A549 (cell line): ENCODE measurements at regions of chr13 and their contacts with region 1.

Region 1: DNA sequence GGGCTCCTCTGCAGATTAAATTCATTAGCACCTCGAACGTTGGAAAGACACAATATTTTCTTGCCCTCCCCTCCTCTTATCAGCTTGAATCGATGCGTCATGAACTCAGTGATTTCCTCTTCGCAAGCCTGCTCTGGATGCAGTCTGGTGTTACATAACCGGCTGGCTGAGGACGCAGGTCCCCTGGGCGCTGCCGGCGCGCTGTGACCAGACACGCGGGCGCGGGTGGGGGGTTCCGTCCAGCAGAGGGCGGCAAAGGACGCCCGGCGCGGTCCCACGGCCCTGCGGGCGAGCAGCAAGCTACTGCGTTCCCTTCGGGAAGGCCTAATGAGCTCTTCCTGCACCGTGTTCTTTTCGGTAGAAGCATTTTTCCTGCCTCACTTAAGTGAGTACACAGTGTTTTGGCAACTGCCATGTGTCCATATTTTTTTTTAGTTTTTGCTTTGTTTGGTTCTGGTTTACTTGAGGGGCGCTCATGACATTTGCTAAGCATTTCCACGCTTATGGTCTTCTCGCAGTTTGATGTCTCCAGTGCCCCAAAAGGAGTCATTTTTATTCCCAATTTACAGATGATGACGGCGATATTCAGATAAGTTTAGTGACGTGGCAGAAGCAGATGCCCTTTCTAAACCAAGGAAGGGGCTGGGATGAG is 112.2 kb upstream of the MBNL2 start:
- DNase-seq: peak; percentile 74 to 83
- ATAC-seq: peak; percentile 97 to 98
- H3K4me3 ChIP-seq: no peak overlapping the region
- H3K27ac ChIP-seq: peak overlapping the region; percentile 61 to 64; a peak in 5 of 6 replicates
- H3K4me1 ChIP-seq: peaks cover 46% of the 10 kb centered on the region
- CTCF ChIP-seq: peak; percentile 89
- EP300 ChIP-seq: no peak
- POLR2A ChIP-seq: no peak
- RAD21 ChIP-seq: peak; percentile 95 to 99

Region 2: GRCh38 chr13:96822895-96823294 is 287.1 kb before region 1 on chr13:
- CTCF ChIA-PET with region 1: no interaction called
- POLR2A ChIA-PET with region 1: no interaction called
- DNase-seq: peak; percentile 4 to 40
- ATAC-seq: peak; percentile 82 to 94
- H3K4me3 ChIP-seq: no peak overlapping the region
- H3K27ac ChIP-seq: no peak overlapping the region
- H3K4me1 ChIP-seq: no peaks in the 10 kb centered on the region
- CTCF ChIP-seq: no peak
- EP300 ChIP-seq: no peak
- POLR2A ChIP-seq: no peak
- RAD21 ChIP-seq: no peak

Region 3: DNA sequence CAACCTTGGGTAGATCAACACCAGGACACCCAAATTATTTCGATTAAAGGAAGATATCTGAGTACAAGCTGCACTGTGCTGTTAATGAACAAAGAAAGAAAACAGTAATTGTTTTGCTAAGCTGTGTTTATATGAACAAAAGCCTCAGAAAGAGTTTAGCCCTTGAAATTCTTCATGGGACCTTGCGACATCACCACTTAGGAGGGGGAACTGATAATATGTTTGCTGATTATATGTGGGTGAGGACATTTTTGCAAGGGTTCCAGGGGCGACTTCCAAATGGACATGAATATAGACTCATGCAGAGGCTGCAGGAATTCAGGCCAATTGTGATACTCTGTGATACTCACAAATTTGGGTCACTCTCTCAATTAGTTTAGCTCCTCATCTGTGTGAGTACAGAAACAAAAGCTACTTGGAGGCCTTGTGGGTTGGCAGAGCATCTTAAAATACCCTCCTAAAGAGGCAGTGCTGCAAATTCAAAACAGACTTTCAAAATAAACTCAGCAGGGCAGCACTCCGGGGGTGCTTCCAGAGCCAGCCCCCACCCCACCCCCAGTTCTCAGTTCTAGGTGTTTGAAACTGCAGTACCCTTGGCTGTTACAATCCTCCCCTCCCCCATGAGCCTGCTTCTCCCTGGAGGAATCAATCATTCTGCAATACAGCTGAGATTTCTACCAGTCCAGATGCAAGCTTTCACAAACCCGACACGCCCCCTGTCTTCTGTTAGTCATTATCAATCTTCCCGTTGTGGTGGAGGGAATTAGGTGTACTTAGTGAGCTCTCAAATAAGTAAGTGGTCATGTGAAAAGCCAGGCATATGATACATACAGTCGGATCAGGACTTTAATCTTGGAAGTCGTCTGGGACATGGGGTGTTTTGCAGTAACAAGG is 15.2 kb after region 1 on chr13:
- CTCF ChIA-PET with region 1: interaction called, 20 read pairs
- POLR2A ChIA-PET with region 1: no interaction called
- DNase-seq: peak in 1 of 2 experiments; percentile 41
- ATAC-seq: peak in 1 of 2 experiments; percentile 49; a peak in 3 of 6 replicates
- H3K4me3 ChIP-seq: no peak overlapping the region
- H3K27ac ChIP-seq: peak overlapping the region; percentile 35 to 63; a peak in 5 of 6 replicates
- H3K4me1 ChIP-seq: peaks cover 63% of the 10 kb centered on the region
- CTCF ChIP-seq: no peak
- EP300 ChIP-seq: no peak
- POLR2A ChIP-seq: no peak
- RAD21 ChIP-seq: no peak

Region 4: DNA sequence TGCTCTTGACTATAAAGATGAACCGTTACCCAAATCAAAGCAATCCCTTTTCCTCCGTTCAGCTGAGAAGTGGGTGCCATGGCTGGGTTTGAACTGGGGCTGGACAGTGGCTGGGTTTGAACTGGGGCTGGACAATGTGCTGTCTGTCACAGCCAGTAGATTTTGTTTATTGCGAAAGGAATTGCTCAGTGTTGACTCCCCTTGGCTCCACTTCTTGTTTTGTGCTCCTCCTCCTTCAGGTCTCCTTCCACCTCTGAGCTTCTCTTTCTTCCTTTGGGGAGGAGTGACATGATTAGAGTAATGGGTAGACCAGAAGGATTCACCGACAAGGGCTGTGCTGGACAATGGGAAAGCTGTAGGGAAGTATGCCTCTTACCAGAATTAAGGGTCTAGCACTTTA is 92.8 kb after region 1 on chr13:
- CTCF ChIA-PET with region 1: interaction called, 171 read pairs
- POLR2A ChIA-PET with region 1: no interaction called
- DNase-seq: no peak
- ATAC-seq: no peak
- H3K4me3 ChIP-seq: no peak overlapping the region
- H3K27ac ChIP-seq: no peak overlapping the region
- H3K4me1 ChIP-seq: peaks cover 15% of the 10 kb centered on the region
- CTCF ChIP-seq: no peak
- EP300 ChIP-seq: no peak
- POLR2A ChIP-seq: no peak
- RAD21 ChIP-seq: no peak

Region 5: DNA sequence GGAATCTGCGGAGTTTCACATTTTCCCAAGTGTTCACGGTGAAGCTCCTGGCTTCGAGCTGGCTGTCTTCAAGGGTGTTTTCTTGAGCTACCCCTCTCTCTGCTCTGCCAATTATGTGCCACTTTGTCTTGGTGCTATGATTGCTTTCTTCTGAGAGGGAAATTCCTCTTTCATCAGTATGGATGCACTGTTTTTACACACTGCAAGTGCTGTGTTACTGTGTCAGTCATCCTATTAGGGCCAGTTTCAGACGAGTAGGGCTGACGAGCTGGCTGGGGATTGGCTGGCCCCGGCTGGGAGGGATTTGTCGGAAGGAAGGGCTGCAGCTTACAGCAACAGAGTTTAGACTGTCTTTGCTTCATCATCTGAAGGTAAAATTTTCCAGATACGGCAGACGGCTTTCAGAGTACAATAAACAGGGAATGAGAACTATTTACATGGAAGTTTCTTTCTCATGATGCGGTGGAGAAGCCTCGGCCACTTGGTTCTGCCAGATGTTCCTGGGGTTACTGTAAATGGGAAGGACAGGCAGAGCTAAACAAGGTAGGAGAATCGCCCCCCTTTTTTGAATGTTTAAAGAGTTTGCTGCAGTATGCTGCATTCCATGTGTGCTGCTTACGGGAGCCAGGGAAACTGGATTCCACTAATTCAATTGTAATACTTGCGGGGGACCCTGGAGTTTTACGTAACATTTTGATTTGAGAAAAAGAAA is 112.2 kb after region 1 on chr13 and contains the start of gene MBNL2:
- CTCF ChIA-PET with region 1: interaction called, 27 read pairs
- POLR2A ChIA-PET with region 1: interaction called, 3 read pairs
- DNase-seq: peak; percentile 67 to 87
- ATAC-seq: peak; percentile 99 to 100
- H3K4me3 ChIP-seq: peak within 1 kb of the TSS; percentile 65
- H3K27ac ChIP-seq: peak within 1 kb of the TSS; percentile 73 to 84
- H3K4me1 ChIP-seq: peaks cover 34% of the 10 kb centered on the region
- CTCF ChIP-seq: no peak
- EP300 ChIP-seq: no peak
- POLR2A ChIP-seq: 0 out of 2 replicates have a peak, but pooled peaks have one; percentile 16
- RAD21 ChIP-seq: no peak
- polyA plus RNA-seq, gene MBNL2: 20.6 and 25.9 TPM in 2 replicates

Region 6: GRCh38 chr13:97284558-97284957 is 174.6 kb after region 1 on chr13:
- CTCF ChIA-PET with region 1: no interaction called
- POLR2A ChIA-PET with region 1: no interaction called
- DNase-seq: no peak
- ATAC-seq: no peak
- H3K4me3 ChIP-seq: no peak overlapping the region
- H3K27ac ChIP-seq: no peak overlapping the region
- H3K4me1 ChIP-seq: peaks cover 54% of the 10 kb centered on the region
- CTCF ChIP-seq: no peak
- EP300 ChIP-seq: no peak
- POLR2A ChIP-seq: no peak
- RAD21 ChIP-seq: no peak

Region 7: DNA sequence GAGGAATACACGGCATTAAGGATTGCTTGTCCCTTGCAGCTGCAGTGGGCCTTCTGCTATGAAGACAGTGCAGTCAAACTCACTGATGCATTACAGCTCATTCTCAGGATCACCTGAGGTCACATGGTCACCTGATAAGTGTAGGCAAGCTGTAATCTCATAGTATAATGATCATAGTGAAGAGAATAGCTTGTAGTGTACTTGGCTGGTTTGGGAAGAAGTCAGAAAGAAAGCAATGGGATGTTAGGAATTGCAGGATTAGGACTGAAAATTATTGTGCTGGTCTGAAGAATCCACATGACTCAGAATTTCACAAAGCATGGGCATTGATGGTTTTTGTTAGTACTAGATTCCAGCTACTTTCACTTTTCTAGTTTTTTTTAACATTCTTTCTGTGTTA is 188.8 kb after region 1 on chr13:
- CTCF ChIA-PET with region 1: interaction called, 10 read pairs
- POLR2A ChIA-PET with region 1: no interaction called
- DNase-seq: no peak
- ATAC-seq: no peak
- H3K4me3 ChIP-seq: no peak overlapping the region
- H3K27ac ChIP-seq: peak overlapping the region; percentile 1 to 42; a peak in 3 of 6 replicates
- H3K4me1 ChIP-seq: peaks cover 70% of the 10 kb centered on the region
- CTCF ChIP-seq: no peak
- EP300 ChIP-seq: no peak
- POLR2A ChIP-seq: no peak
- RAD21 ChIP-seq: no peak

Region 8: DNA sequence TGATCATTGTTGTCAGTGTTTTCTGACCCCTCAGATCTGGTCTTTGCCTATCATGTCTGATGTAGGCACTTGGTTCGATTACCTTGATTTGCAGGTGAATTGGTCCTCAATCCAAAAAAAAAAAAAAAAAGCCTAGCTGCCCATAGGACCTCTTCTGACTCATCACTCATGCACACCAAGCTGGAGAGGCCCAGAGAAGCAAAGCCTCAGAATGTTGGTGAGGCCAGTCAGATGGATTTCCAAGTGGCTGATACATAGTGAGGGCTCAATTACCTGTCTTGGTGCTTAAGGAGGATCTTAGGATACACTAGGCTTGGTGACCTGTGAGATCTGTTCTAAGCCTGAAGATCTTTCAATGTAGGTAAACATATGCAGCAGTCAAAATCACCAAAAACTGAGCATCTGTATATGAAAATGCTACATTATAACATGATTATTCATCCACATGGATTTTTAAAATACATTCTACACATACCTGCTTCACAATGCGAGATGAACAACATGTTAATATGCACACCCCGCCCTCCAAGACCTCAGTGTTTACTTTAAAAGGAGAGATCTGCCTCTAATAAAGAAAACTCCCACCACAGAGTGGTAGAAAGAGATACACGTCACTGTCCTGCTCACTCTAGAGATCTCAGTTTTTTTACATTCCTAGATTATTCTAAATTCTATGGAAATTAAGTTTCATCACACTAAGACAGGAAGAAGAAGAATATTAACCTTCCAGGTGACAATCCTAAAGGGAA is 244.1 kb after region 1 on chr13:
- CTCF ChIA-PET with region 1: interaction called, 39 read pairs
- POLR2A ChIA-PET with region 1: interaction called, 3 read pairs
- DNase-seq: no peak
- ATAC-seq: peak in 1 of 2 experiments; percentile 43; a peak in 1 of 6 replicates
- H3K4me3 ChIP-seq: no peak overlapping the region
- H3K27ac ChIP-seq: no peak overlapping the region
- H3K4me1 ChIP-seq: peaks cover 19% of the 10 kb centered on the region; the same call in 1 of the 3 replicates
- CTCF ChIP-seq: no peak
- EP300 ChIP-seq: no peak
- POLR2A ChIP-seq: no peak
- RAD21 ChIP-seq: no peak